Activated naive CD8-positive, alpha-beta T cell treated with anti-CD3 and anti-CD28 coated beads, Interleukin-2, amount 10 ng/mL, durations not matched to agents 7 days and 5 days (primary cell): ENCODE measurements at regions of chr6 and their contacts with region 1.

Region 1: DNA sequence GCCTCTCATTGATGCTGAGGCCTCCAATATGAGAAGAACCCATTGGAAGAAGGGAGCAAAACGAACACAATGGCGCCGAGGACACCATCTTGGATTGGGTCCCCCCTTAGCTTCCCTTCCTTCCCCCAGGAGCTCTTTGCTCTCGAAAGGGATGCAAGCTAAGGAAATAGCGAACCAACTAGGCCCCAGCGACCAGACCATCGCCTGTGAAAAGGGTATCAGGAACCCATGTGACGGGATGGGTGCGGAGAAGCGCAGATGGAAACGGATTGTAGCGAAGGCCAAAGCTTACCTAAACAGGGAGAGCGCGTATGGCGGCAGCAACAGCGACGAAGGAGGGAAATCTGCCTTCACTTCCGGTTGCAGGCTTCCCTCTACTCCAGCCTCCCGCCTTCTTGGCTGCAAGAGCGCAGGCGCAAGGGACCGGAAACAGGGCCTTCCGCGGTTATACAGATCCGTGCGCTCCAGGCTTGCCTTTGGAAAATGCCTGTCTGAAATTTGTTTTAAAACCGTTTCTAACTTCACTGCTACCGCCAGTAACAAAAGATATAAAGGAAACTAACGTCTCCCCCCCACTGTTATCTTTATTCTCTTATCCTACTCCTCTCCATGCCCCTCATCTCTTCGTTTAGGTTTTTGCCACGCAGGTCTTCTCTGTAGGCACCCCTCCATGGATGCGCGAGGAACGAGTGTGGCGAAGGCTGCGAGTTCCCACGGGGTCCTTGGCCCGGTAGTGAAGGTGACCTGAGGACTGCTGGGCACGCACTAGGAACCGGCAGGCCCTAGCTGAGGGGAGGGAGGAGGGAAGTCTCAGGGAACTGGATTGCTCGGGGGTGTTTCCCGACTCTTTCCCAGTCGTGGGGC is at the start of gene DDX39B:
- DNase-seq: peak; percentile 89
- ATAC-seq: peak; percentile 80
- H3K4me3 Mint-ChIP-seq: peak within 1 kb of the TSS; percentile 95
- H3K27ac Mint-ChIP-seq: peak within 1 kb of the TSS; percentile 91
- H3K4me1 Mint-ChIP-seq: peaks cover 37% of the 10 kb centered on the region
- H3K27me3 Mint-ChIP-seq: no peaks in the 10 kb centered on the region
- total RNA-seq, gene DDX39B: 531 to 555 TPM

Region 2: GRCh38 chr6:31529329-31530150 is 12.3 kb before region 1 on chr6:
- POLR2A ChIA-PET with region 1: interaction called, 27 read pairs
- DNase-seq: no peak
- ATAC-seq: peak; percentile 24
- H3K4me3 Mint-ChIP-seq: no peak overlapping the region
- H3K27ac Mint-ChIP-seq: no peak overlapping the region
- H3K4me1 Mint-ChIP-seq: peaks cover 16% of the 10 kb centered on the region
- H3K27me3 Mint-ChIP-seq: no peaks in the 10 kb centered on the region

Region 3: DNA sequence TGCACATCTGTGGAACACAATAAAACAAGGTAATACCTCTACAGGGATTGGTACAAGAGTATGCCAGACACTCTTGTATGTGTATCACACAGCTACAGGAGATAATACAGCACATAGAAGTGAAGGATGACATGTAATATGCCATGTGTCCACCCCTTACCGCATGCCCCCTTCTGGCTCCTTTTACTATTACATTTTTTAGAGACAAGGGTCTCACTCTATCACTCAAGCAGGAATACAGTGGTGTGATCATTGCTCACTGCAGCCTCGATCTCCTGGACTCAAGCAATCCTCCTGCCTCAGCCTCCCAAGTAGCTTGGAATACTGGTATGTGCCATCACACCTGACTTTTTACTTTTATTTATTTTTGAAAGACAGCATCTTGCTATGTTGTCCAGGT is 55.1 kb after region 1 on chr6:
- POLR2A ChIA-PET with region 1: interaction called, 21 read pairs
- DNase-seq: no peak
- ATAC-seq: peak; percentile 50
- H3K4me3 Mint-ChIP-seq: no peak overlapping the region
- H3K27ac Mint-ChIP-seq: no peak overlapping the region
- H3K4me1 Mint-ChIP-seq: peaks cover 49% of the 10 kb centered on the region
- H3K27me3 Mint-ChIP-seq: no peaks in the 10 kb centered on the region

Region 4: GRCh38 chr6:31652925-31653718 is 111.2 kb after region 1 on chr6:
- POLR2A ChIA-PET with region 1: interaction called, 18 read pairs
- DNase-seq: no peak
- ATAC-seq: peak; percentile 66
- H3K4me3 Mint-ChIP-seq: peak overlapping the region; percentile 94
- H3K27ac Mint-ChIP-seq: peak overlapping the region; percentile 99
- H3K4me1 Mint-ChIP-seq: peaks cover 46% of the 10 kb centered on the region
- H3K27me3 Mint-ChIP-seq: no peaks in the 10 kb centered on the region